ENCODE measurements at regions of chr11 and their contacts with region 1.

Region 1: GRCh38 chr11:38246451-38246850 is 1648.4 kb upstream of the RAG2 start:
- DNase-seq: no peak

Region 2: DNA sequence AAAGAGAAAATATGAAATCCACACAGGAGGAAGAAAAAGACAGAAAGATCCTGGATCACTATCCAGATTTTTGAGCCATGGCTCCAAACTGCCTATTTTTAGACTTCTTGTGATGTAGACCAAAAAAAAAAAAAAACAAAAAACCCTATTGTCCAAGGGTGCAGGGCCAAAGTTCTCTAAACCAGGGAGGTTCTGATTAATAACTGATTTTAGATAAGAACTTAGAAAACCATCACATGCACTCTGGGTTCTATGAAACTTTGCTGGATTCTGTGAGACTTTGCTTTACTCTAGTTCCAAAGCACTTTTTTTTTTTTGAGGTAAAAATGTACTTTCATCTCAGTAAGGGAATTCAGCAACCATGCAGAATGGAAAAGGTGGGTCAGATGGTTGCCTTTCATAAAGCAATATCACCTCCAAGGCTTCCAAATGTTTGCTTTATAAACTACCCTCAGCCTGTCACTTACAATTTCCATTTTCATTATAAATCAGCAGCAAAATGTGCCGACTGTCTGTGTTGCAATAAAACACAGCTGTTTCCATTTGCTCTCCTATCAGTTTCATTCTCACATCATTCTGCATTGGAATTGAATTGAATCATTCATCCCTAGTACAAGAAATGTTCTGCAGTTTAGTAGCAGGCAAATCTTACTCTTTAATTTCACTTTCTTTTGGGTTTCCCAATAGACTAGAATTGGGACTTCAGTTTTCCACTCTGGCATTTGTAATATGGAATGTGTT is 64.2 kb before region 1 on chr11:
- intact Hi-C with region 1: loop called (anchors 2 kb)
- DNase-seq: no peak